Activated naive CD4-positive, alpha-beta T cell treated with anti-CD3 and anti-CD28 coated beads for 36 hours (primary cell): ENCODE measurements at regions of chr4 and their contacts with region 1.

Region 1: GRCh38 chr4:48085821-48086607 is 48.0 kb downstream of the TXK start:
- DNase-seq: no peak
- H3K4me3 Mint-ChIP-seq: no peak overlapping the region
- H3K27ac Mint-ChIP-seq: no peak overlapping the region
- H3K4me1 Mint-ChIP-seq: peaks cover 27% of the 10 kb centered on the region
- H3K27me3 Mint-ChIP-seq: no peaks in the 10 kb centered on the region

Region 2: DNA sequence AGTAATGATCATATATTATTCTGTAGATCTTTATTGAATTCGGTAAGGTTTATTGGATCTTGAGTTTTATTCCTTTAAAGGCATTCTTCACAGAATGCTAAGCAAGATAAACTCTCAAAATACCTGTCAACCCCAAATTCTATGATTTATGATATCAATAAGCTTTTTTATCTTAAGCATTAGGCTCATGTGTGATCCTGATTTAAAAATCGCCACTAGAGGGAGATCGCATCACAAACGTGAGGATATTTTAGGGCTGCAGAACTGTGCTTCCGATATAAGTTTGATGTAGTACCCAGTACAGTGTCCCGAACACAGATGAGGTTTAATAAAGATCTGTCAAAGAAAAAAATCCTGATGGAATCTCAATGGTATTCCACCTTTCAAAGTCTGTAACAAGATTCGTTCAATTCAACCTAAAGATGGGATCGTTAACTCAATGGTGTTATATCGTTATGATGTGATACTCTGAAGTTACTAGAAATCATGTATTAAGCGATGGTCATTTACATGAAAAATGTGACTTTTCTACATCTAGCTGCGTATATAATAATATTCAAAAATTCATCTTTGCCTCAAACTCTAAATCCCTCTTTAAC is 417.1 kb before region 1 on chr4:
- CTCF ChIA-PET with region 1: interaction called, 5 read pairs
- intact Hi-C with region 1: loop called (anchors 5 kb)
- DNase-seq: peak; percentile 27
- H3K4me3 Mint-ChIP-seq: no peak overlapping the region
- H3K27ac Mint-ChIP-seq: no peak overlapping the region
- H3K4me1 Mint-ChIP-seq: no peaks in the 10 kb centered on the region
- H3K27me3 Mint-ChIP-seq: peaks cover 5% of the 10 kb centered on the region

Region 3: GRCh38 chr4:47704693-47705325 is 381.2 kb before region 1 on chr4:
- CTCF ChIA-PET with region 1: interaction called, 3 read pairs
- intact Hi-C with region 1: loop called (anchors 1 kb)
- DNase-seq: peak; percentile 37
- H3K4me3 Mint-ChIP-seq: no peak overlapping the region
- H3K27ac Mint-ChIP-seq: no peak overlapping the region
- H3K4me1 Mint-ChIP-seq: no peaks in the 10 kb centered on the region
- H3K27me3 Mint-ChIP-seq: peaks cover 15% of the 10 kb centered on the region

Region 4: DNA sequence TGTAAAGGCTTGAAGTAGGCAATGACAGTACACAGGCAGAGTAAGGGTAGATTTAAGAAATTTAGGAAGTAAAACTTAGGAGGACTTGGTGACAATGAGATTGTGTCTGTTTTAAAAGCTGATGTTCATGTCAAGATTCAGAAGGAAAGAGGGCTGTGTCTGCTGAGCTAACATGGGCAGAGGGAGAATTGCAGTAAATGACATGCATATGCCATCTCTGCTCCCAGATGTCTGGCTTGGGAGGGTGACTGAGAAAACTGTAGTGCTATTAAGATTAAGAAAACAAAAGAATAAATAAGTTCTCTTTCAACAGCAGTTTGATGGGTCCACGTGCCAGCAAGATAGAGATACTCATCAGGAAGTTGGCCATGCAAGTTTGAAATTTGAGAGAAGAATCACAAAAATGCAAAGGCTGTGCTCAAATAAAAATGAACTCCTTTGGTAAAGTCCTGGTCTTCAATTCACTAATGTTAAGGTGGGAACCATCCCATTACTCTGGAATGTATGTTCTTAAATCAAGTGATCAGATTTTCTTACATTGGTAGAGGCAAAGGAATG is 178.8 kb before region 1 on chr4:
- CTCF ChIA-PET with region 1: no interaction called
- intact Hi-C with region 1: no loop called
- DNase-seq: no peak
- H3K4me3 Mint-ChIP-seq: no peak overlapping the region
- H3K27ac Mint-ChIP-seq: no peak overlapping the region
- H3K4me1 Mint-ChIP-seq: peaks cover 16% of the 10 kb centered on the region
- H3K27me3 Mint-ChIP-seq: no peaks in the 10 kb centered on the region

Region 5: DNA sequence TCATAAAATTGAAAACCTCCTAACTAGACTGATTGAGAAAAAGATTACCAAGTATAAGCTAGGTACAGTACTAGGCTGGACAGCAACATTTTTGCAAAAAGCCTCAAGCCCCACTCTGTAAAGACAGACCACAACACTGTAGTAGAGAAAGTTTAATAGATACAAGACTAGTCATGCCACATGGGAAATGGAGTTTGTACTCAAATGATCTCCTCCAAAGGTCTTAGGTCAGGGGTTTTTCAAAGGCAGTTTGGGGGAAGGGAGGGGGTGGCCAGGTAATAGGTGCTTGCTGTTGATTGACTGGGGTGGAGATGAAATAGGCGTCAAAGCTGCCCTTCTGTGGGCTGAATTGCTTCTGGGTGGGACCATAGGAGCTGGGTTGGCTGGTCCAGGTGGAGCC is 83.7 kb before region 1 on chr4:
- CTCF ChIA-PET with region 1: interaction called, 47 read pairs
- intact Hi-C with region 1: loop called (anchors 1 kb)
- DNase-seq: no peak
- H3K4me3 Mint-ChIP-seq: no peak overlapping the region
- H3K27ac Mint-ChIP-seq: no peak overlapping the region
- H3K4me1 Mint-ChIP-seq: no peaks in the 10 kb centered on the region
- H3K27me3 Mint-ChIP-seq: no peaks in the 10 kb centered on the region

Region 6: DNA sequence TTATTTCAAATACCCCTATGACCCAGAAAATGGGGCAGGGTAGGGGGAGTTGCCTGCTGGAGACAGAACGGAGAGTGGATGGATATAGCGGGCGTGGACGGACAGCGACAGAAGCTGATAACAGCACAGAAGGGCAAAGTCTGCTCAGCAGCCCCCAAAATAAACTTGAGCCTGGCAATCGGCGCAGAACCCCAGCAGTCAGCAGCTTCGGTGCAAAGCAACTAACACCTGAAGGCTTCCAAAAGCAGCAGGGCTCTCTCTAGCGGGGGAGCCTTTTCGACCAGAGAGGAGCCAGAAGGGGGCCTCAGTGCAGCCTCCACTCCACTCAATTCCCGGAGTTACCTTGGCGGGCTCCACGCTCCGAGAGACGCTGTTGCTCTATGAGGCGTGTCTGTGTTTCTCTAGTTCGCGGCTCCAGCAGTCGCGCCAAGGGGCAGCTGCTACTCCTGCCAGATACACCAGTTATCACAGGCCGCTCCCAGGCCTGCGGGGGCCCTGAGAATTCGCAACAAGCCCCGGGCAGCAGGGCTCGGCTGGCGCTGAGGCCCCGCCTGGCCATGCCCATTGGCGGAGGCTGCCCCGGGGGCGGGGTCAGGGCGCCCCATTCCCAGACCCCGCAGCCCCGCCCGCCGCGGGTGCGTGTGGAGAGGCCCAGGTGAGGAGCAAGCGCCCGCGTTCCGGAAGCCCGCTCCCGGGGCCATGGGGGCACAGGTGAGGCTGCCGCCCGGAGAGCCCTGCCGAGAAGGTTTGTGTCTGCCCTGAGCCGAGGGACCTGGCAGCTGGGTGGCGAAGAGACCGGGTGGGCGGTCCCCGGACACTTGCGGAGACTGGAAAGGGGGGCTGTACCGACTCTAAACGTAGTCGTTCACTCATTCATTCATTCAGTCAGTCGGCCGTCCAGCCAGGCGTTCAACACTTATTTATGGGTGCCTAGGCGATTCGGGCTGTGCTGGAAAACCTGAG is 69.6 kb before region 1 on chr4 and contains the starts of genes CNGA1 and NIPAL1:
- CTCF ChIA-PET with region 1: interaction called, 8 read pairs
- intact Hi-C with region 1: loop called (anchors 1 kb)
- DNase-seq: peak; percentile 72
- H3K4me3 Mint-ChIP-seq: peak within 1 kb of the TSS; percentile 81
- H3K27ac Mint-ChIP-seq: peak within 1 kb of the TSS; percentile 46
- H3K4me1 Mint-ChIP-seq: peaks cover 26% of the 10 kb centered on the region
- H3K27me3 Mint-ChIP-seq: peaks cover 5% of the 10 kb centered on the region
- total RNA-seq, gene CNGA1: 0.26 to 0.94 TPM
- total RNA-seq, gene NIPAL1: 1.0 to 2.0 TPM

Region 7: DNA sequence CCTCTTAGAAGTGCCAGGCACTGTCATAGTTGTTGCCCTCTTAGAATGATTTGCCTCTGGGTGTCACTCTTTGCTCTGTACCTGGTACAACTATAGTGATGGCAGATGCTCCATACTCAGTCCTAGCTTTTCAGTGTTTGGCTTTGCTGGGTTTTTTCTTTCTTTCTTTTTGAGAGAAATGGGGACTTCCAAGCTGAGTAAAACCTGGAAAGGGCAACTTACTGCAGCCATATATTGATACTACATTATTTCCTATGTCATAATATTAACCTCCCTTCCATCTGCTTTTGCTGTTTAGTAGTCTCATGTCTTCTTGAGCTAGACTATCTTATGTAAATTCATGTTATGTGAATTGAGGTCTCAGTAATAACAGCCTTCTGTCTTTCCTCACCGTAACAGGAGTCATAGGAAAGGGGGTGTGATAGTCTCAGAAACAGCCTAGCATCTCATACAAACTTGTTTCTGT is 20.4 kb before region 1 on chr4:
- CTCF ChIA-PET with region 1: interaction called, 16 read pairs
- intact Hi-C with region 1: loop called (anchors 1 kb)
- DNase-seq: peak; percentile 48
- H3K4me3 Mint-ChIP-seq: no peak overlapping the region
- H3K27ac Mint-ChIP-seq: peak overlapping the region; percentile 44
- H3K4me1 Mint-ChIP-seq: peaks cover 36% of the 10 kb centered on the region
- H3K27me3 Mint-ChIP-seq: no peaks in the 10 kb centered on the region

Region 8: DNA sequence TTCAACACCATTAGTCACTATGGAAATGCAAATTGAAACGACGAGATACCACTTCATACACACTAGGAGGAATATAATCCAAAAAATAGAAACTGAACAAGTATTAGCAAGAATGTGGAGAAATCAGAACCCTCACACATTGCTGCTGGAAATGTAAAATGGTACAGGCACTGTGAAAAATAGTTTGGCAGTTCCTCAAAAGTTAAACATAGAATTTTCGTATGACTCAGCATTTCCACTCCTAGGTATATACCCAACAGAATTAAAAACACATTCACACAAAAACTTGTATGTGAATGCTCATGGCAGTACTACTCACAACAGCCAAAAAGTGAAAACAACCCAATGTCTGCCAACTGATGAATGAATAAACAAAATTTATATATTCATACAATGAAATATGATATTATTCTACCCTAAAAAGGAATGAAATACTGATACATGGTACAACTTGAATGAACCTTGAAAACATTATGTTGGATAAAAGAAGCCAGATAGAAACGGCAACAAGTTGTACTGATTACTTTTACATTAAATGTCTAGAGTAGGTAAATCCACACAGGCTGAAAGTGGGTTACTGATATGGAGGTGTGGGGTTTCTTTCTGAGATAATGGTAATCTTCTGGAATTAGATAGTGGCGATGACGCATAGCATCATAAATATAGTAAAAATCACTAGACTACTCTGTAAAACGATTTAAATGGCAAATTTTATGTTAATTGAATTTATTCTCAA is 161.3 kb after region 1 on chr4:
- CTCF ChIA-PET with region 1: no interaction called
- intact Hi-C with region 1: no loop called
- DNase-seq: no peak
- H3K4me3 Mint-ChIP-seq: no peak overlapping the region
- H3K27ac Mint-ChIP-seq: no peak overlapping the region
- H3K4me1 Mint-ChIP-seq: peaks cover 3% of the 10 kb centered on the region
- H3K27me3 Mint-ChIP-seq: no peaks in the 10 kb centered on the region

Region 9: GRCh38 chr4:48275247-48275646 is 189.2 kb after region 1 on chr4:
- CTCF ChIA-PET with region 1: no interaction called
- intact Hi-C with region 1: loop called (anchors 5 kb)
- DNase-seq: peak; percentile 22
- H3K4me3 Mint-ChIP-seq: no peak overlapping the region
- H3K27ac Mint-ChIP-seq: no peak overlapping the region
- H3K4me1 Mint-ChIP-seq: peaks cover 10% of the 10 kb centered on the region
- H3K27me3 Mint-ChIP-seq: peaks cover 6% of the 10 kb centered on the region

Region 10: GRCh38 chr4:48570646-48571220 is 484.7 kb after region 1 on chr4:
- CTCF ChIA-PET with region 1: no interaction called
- intact Hi-C with region 1: no loop called
- DNase-seq: no peak
- H3K4me3 Mint-ChIP-seq: no peak overlapping the region
- H3K27ac Mint-ChIP-seq: no peak overlapping the region
- H3K4me1 Mint-ChIP-seq: no peaks in the 10 kb centered on the region
- H3K27me3 Mint-ChIP-seq: no peaks in the 10 kb centered on the region